Dendritic cell treated with granulocyte-macrophage colony-stimulating factor and Interleukin-4, amounts not matched to agents 40 ng/mL and 50 ng/mL, for 4 days (primary cell): ENCODE measurements at regions of chr16 and their contacts with region 1.

Region 1: GRCh38 chr16:68517606-68518166 is 21.4 kb upstream of the ZFP90 start:
- H3K4me3 Mint-ChIP-seq: no peak overlapping the region
- H3K27ac Mint-ChIP-seq: no peak overlapping the region
- H3K4me1 Mint-ChIP-seq: peaks cover 33% of the 10 kb centered on the region
- H3K27me3 Mint-ChIP-seq: peaks cover 4% of the 10 kb centered on the region

Region 2: DNA sequence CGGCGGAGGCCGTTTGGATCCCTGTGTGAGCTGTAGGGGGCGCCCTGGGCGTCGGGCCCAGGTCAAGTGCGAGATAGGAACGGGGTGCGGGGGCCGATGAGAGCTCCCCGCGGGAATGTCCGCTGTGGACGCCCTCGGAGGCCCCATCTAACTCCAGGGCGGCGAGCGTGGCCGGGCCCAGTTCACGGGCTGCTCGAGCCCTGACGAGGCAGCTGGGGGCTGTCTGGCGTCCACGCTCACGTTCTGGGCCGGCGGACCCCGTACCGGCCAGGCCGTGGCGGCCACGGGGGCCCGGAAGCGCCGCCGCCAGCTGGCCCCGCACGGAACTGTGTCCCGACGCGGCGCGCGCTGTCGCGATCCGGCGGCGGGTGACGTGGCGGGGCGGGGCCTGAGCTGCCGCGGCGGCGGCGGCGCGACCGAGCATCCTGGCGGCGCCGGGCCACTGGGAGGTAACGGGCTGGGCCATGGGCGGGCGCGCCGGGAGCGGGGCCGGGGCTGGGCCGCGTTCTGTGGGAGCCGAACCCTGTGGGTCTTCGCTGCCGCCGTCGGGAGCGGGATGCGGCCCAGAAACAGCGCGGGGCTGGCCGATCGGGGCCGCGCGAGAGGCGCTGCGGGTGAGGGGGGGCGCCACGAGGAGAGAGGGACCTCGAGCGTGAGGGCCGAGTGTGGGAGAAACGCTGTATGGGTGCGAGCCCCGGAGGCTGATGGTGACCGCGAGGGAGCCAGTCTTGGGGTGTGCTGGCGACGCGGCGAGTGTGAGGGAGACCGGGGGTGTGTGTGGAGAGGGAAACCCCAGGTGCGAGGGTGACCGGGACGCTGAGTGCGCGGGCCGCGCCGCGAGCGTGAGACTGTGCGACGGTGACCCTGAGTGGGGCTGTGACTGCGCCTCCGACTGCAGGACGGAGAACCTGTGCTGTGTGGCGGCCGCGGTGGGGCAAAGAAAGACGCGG is 253.3 kb before region 1 on chr16 and contains the start of gene SLC7A6:
- intact Hi-C with region 1: loop called (anchors 10 kb)
- H3K4me3 Mint-ChIP-seq: peak within 1 kb of the TSS; percentile 93
- H3K27ac Mint-ChIP-seq: peak within 1 kb of the TSS; percentile 92
- H3K4me1 Mint-ChIP-seq: peaks cover 41% of the 10 kb centered on the region
- H3K27me3 Mint-ChIP-seq: no peaks in the 10 kb centered on the region

Region 3: GRCh38 chr16:68367030-68367429 is 150.7 kb before region 1 on chr16:
- intact Hi-C with region 1: loop called (anchors 10 kb)
- H3K4me3 Mint-ChIP-seq: no peak overlapping the region
- H3K27ac Mint-ChIP-seq: no peak overlapping the region
- H3K4me1 Mint-ChIP-seq: peaks cover 64% of the 10 kb centered on the region
- H3K27me3 Mint-ChIP-seq: peaks cover 60% of the 10 kb centered on the region